Dendritic cell treated with granulocyte-macrophage colony-stimulating factor and Interleukin-4, amounts not matched to agents 40 ng/mL and 50 ng/mL, for 4 days (primary cell): ENCODE measurements at regions of chr1 and their contacts with region 1.

Region 1: DNA sequence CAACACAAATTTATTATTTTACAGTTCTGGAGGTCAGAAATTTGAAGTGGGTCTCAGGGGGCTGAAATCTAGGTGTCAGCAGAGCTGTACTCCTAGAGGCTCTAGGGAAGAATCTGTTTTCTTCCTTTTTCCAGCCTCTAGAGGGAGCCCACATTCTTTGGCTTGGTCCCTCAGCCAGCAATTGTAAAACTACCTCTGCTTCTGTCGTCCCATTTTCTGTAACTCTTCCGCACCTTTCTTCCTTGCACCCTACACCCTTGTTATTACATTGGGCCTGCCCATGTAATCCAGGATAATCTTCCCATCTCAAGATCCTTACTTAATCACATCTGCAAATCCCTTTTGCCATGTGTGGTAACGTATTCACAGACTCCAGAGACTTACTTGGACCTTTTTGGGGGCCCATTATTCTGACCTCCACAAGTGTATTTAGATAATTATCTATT is 24.8 kb upstream of the THEM4 start:
- H3K4me3 Mint-ChIP-seq: no peak overlapping the region
- H3K27ac Mint-ChIP-seq: no peak overlapping the region
- H3K4me1 Mint-ChIP-seq: peaks cover 29% of the 10 kb centered on the region
- H3K27me3 Mint-ChIP-seq: no peaks in the 10 kb centered on the region

Region 2: GRCh38 chr1:151539990-151540981 is 393.8 kb before region 1 on chr1 and contains the start of gene TUFT1:
- intact Hi-C with region 1: no loop called
- H3K4me3 Mint-ChIP-seq: peak within 1 kb of the TSS; percentile 93
- H3K27ac Mint-ChIP-seq: peak within 1 kb of the TSS; percentile 86
- H3K4me1 Mint-ChIP-seq: peaks cover 38% of the 10 kb centered on the region
- H3K27me3 Mint-ChIP-seq: peaks cover 38% of the 10 kb centered on the region

Region 3: DNA sequence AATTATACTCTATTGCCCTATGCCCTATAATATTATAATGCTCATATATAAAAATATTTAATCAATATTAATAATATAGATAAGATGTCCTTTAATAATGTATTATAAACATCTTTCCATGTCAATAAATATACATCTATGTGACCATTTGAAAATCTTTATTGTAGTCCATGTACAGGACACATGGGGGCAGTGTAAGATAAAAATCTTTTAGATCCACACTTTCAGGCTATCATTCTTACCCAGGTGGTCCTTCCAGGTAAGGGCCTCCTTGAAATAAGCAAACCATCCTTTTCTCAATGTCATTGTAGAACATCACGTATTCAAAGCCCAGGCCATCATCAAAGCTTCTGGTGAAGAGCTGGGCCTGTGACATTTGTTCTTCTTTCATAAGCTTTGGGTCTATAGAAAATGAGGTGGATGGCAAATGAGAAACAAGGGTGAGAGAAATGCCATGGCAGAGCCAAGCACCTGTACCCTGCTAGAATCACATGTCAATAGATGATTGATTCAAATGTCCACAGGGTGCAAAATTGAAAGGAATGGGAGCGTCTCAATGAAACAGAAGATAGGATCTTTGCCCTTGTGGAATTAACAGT is 45.0 kb before region 1 on chr1:
- intact Hi-C with region 1: loop called (anchors 5 kb)
- H3K4me3 Mint-ChIP-seq: no peak overlapping the region
- H3K27ac Mint-ChIP-seq: no peak overlapping the region
- H3K4me1 Mint-ChIP-seq: peaks cover 7% of the 10 kb centered on the region
- H3K27me3 Mint-ChIP-seq: no peaks in the 10 kb centered on the region

Region 4: DNA sequence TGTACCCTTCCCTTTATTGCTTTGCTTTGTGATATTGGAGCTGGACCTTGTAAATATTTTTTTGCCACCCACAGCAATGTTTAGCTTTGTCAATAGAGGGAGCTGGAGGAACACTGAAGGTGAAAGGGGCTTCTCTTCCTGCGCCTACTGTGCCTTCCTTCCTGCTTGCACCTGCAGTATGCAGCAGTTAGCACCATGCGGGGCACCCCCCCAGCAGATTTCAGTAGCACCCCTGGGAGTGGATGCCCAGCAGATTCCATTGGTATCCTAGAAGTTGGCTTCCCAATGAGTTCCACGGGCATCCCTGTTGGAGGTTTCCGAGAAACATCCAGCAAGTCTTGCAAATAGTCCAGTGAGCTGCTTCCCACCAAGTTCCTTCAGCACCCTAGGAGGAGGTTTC is 34.0 kb after region 1 on chr1:
- intact Hi-C with region 1: loop called (anchors 5 kb)
- H3K4me3 Mint-ChIP-seq: no peak overlapping the region
- H3K27ac Mint-ChIP-seq: no peak overlapping the region
- H3K4me1 Mint-ChIP-seq: peaks cover 41% of the 10 kb centered on the region
- H3K27me3 Mint-ChIP-seq: no peaks in the 10 kb centered on the region

Region 5: DNA sequence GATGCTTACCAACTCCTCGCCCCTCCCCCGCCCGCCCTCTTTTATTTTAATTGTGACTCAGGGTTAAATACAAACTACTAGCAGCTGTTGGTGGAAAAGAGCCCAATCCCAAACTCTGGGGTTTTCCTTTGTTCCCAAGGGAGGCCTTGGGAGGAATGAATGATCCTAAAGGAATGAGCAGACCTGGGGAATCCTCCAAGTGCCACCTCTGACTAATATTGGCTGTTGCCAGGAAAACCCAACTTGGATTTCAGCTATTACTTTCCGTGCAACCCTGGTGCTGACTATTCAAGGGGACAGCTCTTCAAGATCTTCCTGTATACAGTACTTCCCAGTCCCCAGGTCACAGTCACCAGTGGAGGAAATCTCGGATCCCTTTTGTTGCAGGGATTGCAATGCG is 60.9 kb after region 1 on chr1:
- intact Hi-C with region 1: loop called (anchors 1 kb)
- H3K4me3 Mint-ChIP-seq: no peak overlapping the region
- H3K27ac Mint-ChIP-seq: peak overlapping the region; percentile 58
- H3K4me1 Mint-ChIP-seq: peaks cover 41% of the 10 kb centered on the region
- H3K27me3 Mint-ChIP-seq: no peaks in the 10 kb centered on the region